ENCODE measurements at regions of chr3 and their contacts with region 1.

Region 1: DNA sequence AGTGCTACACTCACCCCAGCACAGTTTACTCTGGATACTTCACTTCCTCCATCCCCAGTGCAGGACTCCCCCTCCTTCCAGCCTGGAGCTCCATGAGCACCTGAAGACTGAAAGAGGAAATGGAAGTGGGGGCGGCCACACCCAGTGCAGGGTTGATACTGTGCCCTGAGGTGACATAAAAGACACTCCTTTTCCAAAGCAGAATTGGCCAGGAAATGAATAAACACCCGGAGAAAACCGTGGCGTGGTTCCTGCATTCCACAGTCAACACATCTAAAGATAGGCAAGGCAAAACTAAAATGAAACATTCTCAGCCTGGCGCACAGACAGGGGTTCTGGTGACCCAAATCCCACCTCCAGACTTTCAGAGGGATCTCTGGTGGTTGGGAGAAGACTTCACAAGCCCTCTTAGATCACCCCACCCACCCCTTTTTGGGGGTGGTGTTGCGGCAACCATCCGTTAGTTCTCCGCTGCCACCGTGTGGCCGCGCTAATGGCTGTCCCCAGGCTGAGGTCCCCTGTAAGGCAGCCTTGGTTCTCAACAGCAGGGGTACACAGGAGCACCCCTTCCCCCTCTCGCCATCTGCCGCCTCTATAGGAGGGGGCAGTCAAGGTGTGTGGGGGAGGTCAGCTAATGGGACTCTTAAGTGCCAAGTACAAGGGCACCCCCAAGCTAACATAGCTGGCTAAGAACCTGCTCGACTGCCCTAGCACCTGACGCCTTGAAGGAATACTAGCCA is 2.5 kb upstream of the MST1R start:
- ATAC-seq: peak; percentile 62 to 79 (median 72)
- H3K4me3 ChIP-seq: no peak overlapping the region
- H3K27ac ChIP-seq: no peak overlapping the region
- H3K4me1 ChIP-seq: peaks cover 0 to 8% of the 10 kb centered on the region in 2 donors

Region 2: GRCh38 chr3:49802719-49803464 is 103.3 kb before region 1 on chr3 and contains the start of gene INKA1:
- in situ Hi-C with region 1: loop called in 1 of 9 experiments (anchors 25 kb)
- ATAC-seq: peak; percentile 70 to 87 (median 81)
- H3K4me3 ChIP-seq: peak within 1 kb of the TSS; percentile 55 to 90 (median 81)
- H3K27ac ChIP-seq: peak within 1 kb of the TSS; percentile 65 to 75
- H3K4me1 ChIP-seq: peaks cover 26 to 38% of the 10 kb centered on the region in 2 donors
- total RNA-seq, gene INKA1: 0.81 to 3.5 (median 2.3) TPM

Measured in motor neuron (in vitro differentiated cells).